ENCODE measurements at regions of chr22 and their contacts with region 1.

Region 1: GRCh38 chr22:29306175-29306834 is at the start of gene GAS2L1:
- DNase-seq: peak; percentile 76 to 82
- ATAC-seq: peak; percentile 63 to 72
- H3K4me3 ChIP-seq: peak within 1 kb of the TSS; percentile 84 to 98 (median 94)
- H3K27ac ChIP-seq: peak within 1 kb of the TSS; percentile 80 to 89 (median 83)
- H3K4me1 ChIP-seq: peaks cover 32 to 47% of the 10 kb centered on the region in 2 donors
- H3K27me3 ChIP-seq: peaks cover 0 to under 1% (median 0%) of the 10 kb centered on the region in 3 donors
- CTCF ChIP-seq: peak; percentile 74 to 90 (median 85)
- POLR2A ChIP-seq: no peak
- total RNA-seq, gene GAS2L1: 4.8 to 23.0 (median 6.6) TPM

Region 2: GRCh38 chr22:29267858-29268417 is 38.4 kb before region 1 on chr22 and contains the starts of genes EWSR1 and RHBDD3:
- in situ Hi-C with region 1: no loop called
- intact Hi-C with region 1: loop called (anchors 1 kb)
- DNase-seq: peak; percentile 95 to 97
- ATAC-seq: peak; percentile 92 to 93
- H3K4me3 ChIP-seq: peak within 1 kb of the TSS; percentile 83 to 97 (median 94)
- H3K27ac ChIP-seq: peak within 1 kb of the TSS; percentile 97 to 100 (median 98)
- H3K4me1 ChIP-seq: peaks cover 48 to 57% of the 10 kb centered on the region in 2 donors
- H3K27me3 ChIP-seq: no peaks in the 10 kb centered on the region
- CTCF ChIP-seq: peak in 2 of 5 experiments; percentile 28 to 29
- POLR2A ChIP-seq: peak; percentile 85 to 89
- total RNA-seq, gene EWSR1: 192 to 269 (median 202) TPM
- total RNA-seq, gene RHBDD3: 19.8 to 38.0 (median 28.6) TPM

Region 3: GRCh38 chr22:29328566-29329500 is 22.5 kb after region 1 on chr22:
- in situ Hi-C with region 1: no loop called
- intact Hi-C with region 1: loop called (anchors 1 kb)
- DNase-seq: peak; percentile 76 to 90
- ATAC-seq: peak; percentile 79 to 85
- H3K4me3 ChIP-seq: no peak overlapping the region
- H3K27ac ChIP-seq: peak overlapping the region; percentile 74 to 84 (median 81)
- H3K4me1 ChIP-seq: peaks cover 38 to 41% of the 10 kb centered on the region in 2 donors
- H3K27me3 ChIP-seq: no peaks in the 10 kb centered on the region
- CTCF ChIP-seq: peak in 1 of 5 experiments; percentile 25
- POLR2A ChIP-seq: peak in 1 of 2 donors; percentile 30

Region 4: DNA sequence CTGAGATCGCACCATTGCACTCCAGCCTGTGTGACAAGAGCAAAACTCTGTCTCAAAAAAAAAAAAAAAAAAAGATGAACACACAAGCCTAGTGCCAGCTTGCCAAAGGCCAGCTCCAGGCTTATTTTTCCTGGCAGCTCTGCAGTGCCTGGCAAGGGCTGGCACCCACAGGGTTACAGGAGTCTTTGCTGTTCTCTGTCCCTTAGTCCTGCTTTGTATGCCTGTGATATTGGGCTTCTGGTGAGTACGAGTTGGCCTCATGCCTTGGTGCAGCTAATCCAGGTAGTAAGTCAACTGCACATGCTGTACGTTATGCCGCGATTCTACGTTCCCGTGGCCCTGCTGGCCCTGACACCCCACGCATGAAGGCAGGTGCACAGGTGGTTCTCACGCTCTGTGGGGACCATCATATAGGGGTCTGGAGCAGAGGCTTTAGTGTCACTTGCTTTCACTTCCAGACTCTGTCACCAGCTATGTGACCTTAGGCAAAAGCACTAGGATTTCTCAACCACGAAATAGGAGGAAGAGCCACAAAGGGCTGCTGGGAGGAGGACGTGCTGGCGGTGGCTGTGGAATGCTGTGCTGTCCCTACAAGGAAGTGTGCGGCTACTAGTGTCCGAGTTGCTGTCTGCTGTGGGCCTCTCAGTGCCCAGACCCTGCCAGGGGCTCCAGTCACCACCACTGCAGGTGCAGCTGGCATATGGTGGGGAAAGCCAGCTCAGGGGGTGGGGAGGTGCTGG is 30.6 kb after region 1 on chr22:
- in situ Hi-C with region 1: no loop called
- intact Hi-C with region 1: loop called (anchors 2 kb)
- DNase-seq: peak; percentile 84 to 88
- ATAC-seq: peak; percentile 92 to 96
- H3K4me3 ChIP-seq: peak overlapping the region in 2 of 4 donors; percentile 16 to 44
- H3K27ac ChIP-seq: peak overlapping the region; percentile 84 to 96 (median 89)
- H3K4me1 ChIP-seq: peaks cover 27 to 36% of the 10 kb centered on the region in 2 donors
- H3K27me3 ChIP-seq: no peaks in the 10 kb centered on the region
- CTCF ChIP-seq: no peak
- POLR2A ChIP-seq: no peak

Region 5: DNA sequence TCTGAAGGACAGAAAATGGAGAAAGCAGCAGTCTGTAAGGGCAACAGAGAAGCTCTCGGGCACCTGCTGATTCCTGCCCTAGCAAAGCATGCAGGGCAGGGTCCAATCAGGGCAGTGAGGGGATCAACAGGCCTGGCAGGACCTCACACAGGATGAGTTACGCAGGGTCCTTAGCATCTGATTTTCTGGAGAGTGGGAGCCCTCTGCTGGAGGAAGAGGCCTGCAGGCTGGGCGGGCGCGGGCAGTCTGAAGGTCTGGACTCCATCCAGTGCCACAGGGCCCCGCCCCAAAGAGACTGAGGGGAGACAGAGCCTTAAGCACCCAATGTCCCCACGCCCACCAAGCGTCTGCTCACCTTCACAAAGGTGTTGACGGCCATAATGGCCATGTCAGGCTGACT is 53.2 kb after region 1 on chr22:
- in situ Hi-C with region 1: no loop called
- intact Hi-C with region 1: loop called (anchors 1 kb)
- DNase-seq: peak; percentile 31 to 69
- ATAC-seq: peak; percentile 63 to 89
- H3K4me3 ChIP-seq: no peak overlapping the region
- H3K27ac ChIP-seq: no peak overlapping the region
- H3K4me1 ChIP-seq: peaks cover 6 to 10% of the 10 kb centered on the region in 2 donors
- H3K27me3 ChIP-seq: no peaks in the 10 kb centered on the region
- CTCF ChIP-seq: peak; percentile 78 to 83 (median 80)
- POLR2A ChIP-seq: no peak

Region 6: DNA sequence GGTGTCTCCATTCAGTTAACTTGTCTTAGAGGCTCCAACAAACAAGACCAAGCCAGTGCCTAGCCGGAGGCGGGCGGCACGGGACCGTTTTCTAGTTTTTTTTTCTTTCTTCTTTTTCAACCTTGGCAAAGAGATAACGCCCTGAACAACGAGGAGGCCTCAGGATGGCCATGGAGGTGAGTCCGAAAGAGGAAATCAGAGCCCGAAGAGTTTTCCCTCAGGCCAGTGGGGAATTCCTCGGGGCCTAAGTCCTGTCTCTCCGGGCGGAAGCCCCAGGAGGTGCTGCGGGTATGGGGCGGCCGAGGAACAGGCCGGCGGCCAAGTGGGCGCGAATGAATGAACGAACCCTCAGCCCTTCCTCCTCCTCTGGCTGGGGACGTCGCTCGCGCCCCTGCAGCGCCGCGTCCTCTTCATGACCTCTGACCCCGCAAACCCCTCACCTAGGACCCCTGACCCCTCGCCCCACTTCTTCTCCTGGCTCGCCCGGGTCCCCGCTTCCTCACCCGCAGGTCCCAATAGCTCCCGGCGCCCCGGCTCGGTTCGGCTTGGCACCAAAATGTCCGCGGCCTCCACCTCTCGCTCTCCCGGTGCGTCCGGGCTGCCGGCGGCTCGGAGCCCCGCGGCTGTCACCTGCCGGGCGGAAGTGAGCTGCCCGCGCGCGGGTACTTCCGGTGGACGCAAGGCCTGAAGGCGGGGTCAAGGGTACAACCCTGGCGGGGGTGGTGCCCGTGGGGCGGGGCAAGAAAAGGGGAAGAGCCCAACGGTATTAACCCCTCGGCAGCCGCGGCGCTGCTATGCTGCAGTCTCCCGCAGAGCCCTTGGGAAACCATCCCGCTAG is 81.8 kb after region 1 on chr22 and contains the start of gene AP1B1:
- in situ Hi-C with region 1: loop called in 1 of 4 experiments (anchors 10 kb)
- intact Hi-C with region 1: loop called (anchors 1 kb)
- DNase-seq: peak; percentile 90 to 95
- ATAC-seq: peak; percentile 92 to 95
- H3K4me3 ChIP-seq: peak within 1 kb of the TSS; percentile 69 to 96 (median 82)
- H3K27ac ChIP-seq: peak within 1 kb of the TSS; percentile 83 to 97 (median 92)
- H3K4me1 ChIP-seq: peaks cover 27 to 28% of the 10 kb centered on the region in 2 donors
- H3K27me3 ChIP-seq: no peaks in the 10 kb centered on the region
- CTCF ChIP-seq: peak in 1 of 5 experiments; percentile 10
- POLR2A ChIP-seq: peak; percentile 78 to 86
- total RNA-seq, gene AP1B1: 26.5 to 44.6 (median 37.3) TPM

Region 7: DNA sequence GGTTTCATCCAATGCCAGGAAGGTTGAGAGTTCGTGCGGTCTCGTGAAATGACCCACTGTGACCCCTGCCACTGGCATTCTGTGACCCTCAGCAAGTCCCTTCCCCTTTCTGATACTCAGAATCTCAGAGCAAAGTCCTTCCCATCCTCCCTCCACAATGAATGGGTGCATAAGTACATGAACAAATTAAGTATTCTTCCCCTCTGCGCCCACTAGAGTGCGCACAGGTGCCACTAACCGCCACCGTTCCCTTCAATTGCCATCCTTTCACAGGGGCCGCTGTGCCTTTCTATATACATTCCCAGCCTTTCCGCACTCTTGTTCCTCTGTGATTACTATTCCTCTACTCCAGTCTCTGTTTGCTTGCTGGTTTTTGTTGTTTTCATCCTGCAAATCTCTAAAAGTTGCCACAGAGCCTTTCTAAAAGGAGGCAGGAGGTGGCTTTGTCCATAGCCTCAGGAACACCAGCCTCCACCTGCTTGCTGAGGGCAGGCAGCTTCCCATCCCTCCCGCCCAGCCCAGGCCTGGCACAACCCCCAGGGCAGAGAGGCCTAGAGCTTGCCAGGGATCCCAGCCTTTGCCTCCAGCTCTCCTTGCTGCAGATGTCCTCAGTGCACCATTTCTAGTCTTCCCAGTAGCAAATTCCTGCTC is 88.8 kb after region 1 on chr22:
- in situ Hi-C with region 1: loop called in 1 of 4 experiments (anchors 10 kb)
- intact Hi-C with region 1: no loop called
- DNase-seq: peak in 1 of 2 donors; percentile 57
- ATAC-seq: peak; percentile 84 to 89
- H3K4me3 ChIP-seq: no peak overlapping the region
- H3K27ac ChIP-seq: no peak overlapping the region
- H3K4me1 ChIP-seq: no peaks in the 10 kb centered on the region
- H3K27me3 ChIP-seq: no peaks in the 10 kb centered on the region
- CTCF ChIP-seq: peak; percentile 52 to 77 (median 71)
- POLR2A ChIP-seq: no peak

Region 8: DNA sequence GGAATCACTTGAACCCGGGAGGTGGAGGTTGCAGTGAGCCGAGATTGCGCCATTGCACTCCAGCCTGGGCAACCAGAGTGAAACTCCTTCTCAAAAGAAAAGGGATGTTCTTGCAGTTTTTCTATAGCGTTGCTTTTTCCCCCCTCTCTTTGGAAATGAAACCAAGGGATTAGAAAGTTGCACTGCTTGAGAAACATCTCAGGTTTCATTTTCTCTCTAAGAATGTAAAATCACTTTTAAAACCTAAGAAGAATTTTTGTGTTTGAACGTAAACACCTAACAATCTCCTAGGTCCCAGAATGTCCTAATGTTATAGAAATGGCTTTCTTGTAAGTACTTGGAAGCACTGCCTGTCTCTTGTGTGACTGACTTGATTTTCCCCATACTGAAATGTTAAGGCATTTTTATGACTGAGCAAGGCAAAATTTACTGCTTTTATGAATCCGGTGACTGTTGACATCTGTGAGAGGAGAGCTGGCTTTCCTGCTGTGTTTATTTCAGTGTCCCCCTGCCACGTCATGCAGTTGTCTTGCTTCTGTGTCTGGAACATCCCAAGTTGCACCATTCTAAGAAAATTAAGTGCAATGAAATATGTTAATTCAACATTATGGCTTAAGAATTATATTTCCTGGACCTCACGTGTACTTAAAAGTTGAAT is 334.9 kb after region 1 on chr22:
- in situ Hi-C with region 1: no loop called
- intact Hi-C with region 1: no loop called
- DNase-seq: no peak
- ATAC-seq: no peak
- H3K4me3 ChIP-seq: no peak overlapping the region
- H3K27ac ChIP-seq: no peak overlapping the region
- H3K4me1 ChIP-seq: no peaks in the 10 kb centered on the region
- H3K27me3 ChIP-seq: no peaks in the 10 kb centered on the region
- CTCF ChIP-seq: no peak
- POLR2A ChIP-seq: no peak